ENCODE measurements at regions of chr10 and their contacts with region 1.

Region 1: GRCh38 chr10:88091490-88092105 is 228.2 kb downstream of the PTEN start:
- DNase-seq: peak; percentile 88
- ATAC-seq: peak; percentile 99
- H3K4me3 Mint-ChIP-seq: peak overlapping the region; percentile 24
- H3K27ac Mint-ChIP-seq: peak overlapping the region; percentile 83
- H3K4me1 Mint-ChIP-seq: peaks cover 38% of the 10 kb centered on the region
- H3K27me3 Mint-ChIP-seq: peaks cover 19% of the 10 kb centered on the region

Region 2: DNA sequence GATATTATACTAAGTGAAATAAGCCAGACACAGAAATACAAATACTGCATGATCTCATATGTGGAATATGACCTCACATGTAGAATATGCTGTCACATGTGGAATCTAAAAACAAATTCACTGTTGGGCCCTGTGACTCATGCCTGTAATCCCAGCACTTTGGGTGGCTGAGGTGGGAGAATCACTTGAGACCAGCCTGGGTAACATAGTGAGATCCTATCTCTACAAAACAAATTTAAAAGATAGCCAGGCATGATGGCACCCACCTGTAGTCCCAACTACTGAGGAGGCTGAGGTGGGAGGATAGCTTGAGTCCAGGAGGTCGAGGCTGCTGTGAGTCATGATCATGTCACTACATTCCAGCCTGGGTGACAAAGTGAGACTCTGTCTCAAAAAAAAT is 67.9 kb before region 1 on chr10:
- CTCF ChIA-PET with region 1: no interaction called
- POLR2A ChIA-PET with region 1: no interaction called
- DNase-seq: no peak
- ATAC-seq: no peak
- H3K4me3 Mint-ChIP-seq: no peak overlapping the region
- H3K27ac Mint-ChIP-seq: no peak overlapping the region
- H3K4me1 Mint-ChIP-seq: peaks cover 6% of the 10 kb centered on the region
- H3K27me3 Mint-ChIP-seq: no peaks in the 10 kb centered on the region

Region 3: DNA sequence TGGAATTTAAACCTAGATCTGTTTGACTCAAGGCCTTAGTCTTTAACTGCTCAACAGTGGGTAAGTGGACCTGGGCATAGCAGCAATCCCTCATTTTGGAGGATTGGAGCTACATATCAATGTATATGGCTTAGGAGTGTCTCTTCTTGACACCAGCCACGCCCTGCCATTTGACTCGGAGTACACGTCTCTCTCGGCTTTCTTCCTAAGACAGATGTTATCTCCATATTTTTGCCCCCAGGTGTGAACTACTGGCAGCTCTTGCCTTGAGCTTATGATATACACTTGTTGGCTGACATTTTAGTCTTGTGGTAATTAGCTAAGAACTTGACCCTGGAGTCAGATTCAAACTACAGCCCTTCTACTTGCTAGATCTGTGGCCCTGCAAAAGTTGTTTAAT is 38.8 kb before region 1 on chr10:
- CTCF ChIA-PET with region 1: no interaction called
- POLR2A ChIA-PET with region 1: no interaction called
- DNase-seq: no peak
- ATAC-seq: no peak
- H3K4me3 Mint-ChIP-seq: no peak overlapping the region
- H3K27ac Mint-ChIP-seq: no peak overlapping the region
- H3K4me1 Mint-ChIP-seq: peaks cover 3% of the 10 kb centered on the region
- H3K27me3 Mint-ChIP-seq: no peaks in the 10 kb centered on the region

Region 4: GRCh38 chr10:88066876-88067275 is 24.7 kb before region 1 on chr10:
- CTCF ChIA-PET with region 1: interaction called, 10 read pairs
- POLR2A ChIA-PET with region 1: interaction called, 3 read pairs
- DNase-seq: peak; percentile 33
- ATAC-seq: no peak
- H3K4me3 Mint-ChIP-seq: peak overlapping the region; percentile 21
- H3K27ac Mint-ChIP-seq: peak overlapping the region; percentile 82
- H3K4me1 Mint-ChIP-seq: peaks cover 67% of the 10 kb centered on the region
- H3K27me3 Mint-ChIP-seq: no peaks in the 10 kb centered on the region

Region 5: DNA sequence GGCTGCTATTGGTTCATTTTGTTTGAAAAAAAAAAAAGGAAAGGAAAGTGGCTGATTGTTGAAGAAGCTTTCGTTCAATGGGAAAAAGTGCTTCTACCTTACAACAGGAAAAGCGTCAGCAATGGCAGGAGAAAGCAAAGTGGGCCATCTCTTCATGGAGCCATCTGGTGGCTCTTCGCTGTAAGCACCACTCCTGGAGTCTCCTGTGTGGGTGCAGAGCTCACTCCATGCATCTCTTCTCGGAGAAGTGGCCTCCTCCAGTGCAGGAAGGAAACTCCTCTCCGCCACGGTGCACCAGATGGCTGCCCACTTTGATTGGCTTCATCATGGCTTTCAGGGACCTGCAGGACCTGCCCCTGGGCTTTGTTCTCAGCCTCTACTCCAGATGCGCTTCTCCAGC is 22.8 kb after region 1 on chr10:
- CTCF ChIA-PET with region 1: interaction called, 10 read pairs
- POLR2A ChIA-PET with region 1: interaction called, 3 read pairs
- DNase-seq: no peak
- ATAC-seq: no peak
- H3K4me3 Mint-ChIP-seq: no peak overlapping the region
- H3K27ac Mint-ChIP-seq: no peak overlapping the region
- H3K4me1 Mint-ChIP-seq: peaks cover 18% of the 10 kb centered on the region
- H3K27me3 Mint-ChIP-seq: peaks cover 4% of the 10 kb centered on the region

Measured in activated CD8-positive, alpha-beta T cell treated with anti-CD3 and anti-CD28 coated beads, Interleukin-2, amount 10 ng/mL, durations not matched to agents 7 days and 5 days (primary cell).